ENCODE measurements at regions of chr11 and their contacts with region 1.

Region 1: GRCh38 chr11:47578524-47579460 is at the starts of genes KBTBD4 and NDUFS3:
- DNase-seq: peak; percentile 94
- H3K4me3 ChIP-seq: peak within 1 kb of the TSS; percentile 85
- H3K27ac ChIP-seq: peak within 1 kb of the TSS; percentile 40
- H3K4me1 ChIP-seq: peaks cover 21% of the 10 kb centered on the region
- CTCF ChIP-seq: no peak
- total RNA-seq, gene KBTBD4: 25.2 and 25.8 TPM in 2 replicates
- total RNA-seq, gene NDUFS3: 73.9 and 92.7 TPM in 2 replicates

Region 2: GRCh38 chr11:47552566-47553416 is 26.0 kb before region 1 on chr11 and contains the start of gene CELF1:
- CTCF ChIA-PET with region 1: interaction called, 3 read pairs
- POLR2A ChIA-PET with region 1: interaction called, 13 read pairs
- intact Hi-C with region 1: loop called (anchors 1 kb)
- DNase-seq: peak; percentile 96
- H3K4me3 ChIP-seq: peak within 1 kb of the TSS; percentile 89
- H3K27ac ChIP-seq: peak within 1 kb of the TSS; percentile 65
- H3K4me1 ChIP-seq: peaks cover 29% of the 10 kb centered on the region
- CTCF ChIP-seq: peak; percentile 88
- total RNA-seq, gene CELF1: 82.1 and 87.4 TPM in 2 replicates

Region 3: GRCh38 chr11:47565340-47566148 is 13.2 kb before region 1 on chr11 and contains the start of gene PTPMT1:
- CTCF ChIA-PET with region 1: interaction called, 7 read pairs
- POLR2A ChIA-PET with region 1: interaction called, 11 read pairs
- intact Hi-C with region 1: no loop called
- DNase-seq: peak; percentile 69
- H3K4me3 ChIP-seq: peak within 1 kb of the TSS; percentile 75
- H3K27ac ChIP-seq: peak within 1 kb of the TSS; percentile 23
- H3K4me1 ChIP-seq: peaks cover 7% of the 10 kb centered on the region
- CTCF ChIP-seq: no peak
- total RNA-seq, gene PTPMT1: 52.6 and 62.8 TPM in 2 replicates

Region 4: GRCh38 chr11:47715082-47715669 is 136.4 kb after region 1 on chr11 and contains the start of gene AGBL2:
- CTCF ChIA-PET with region 1: no interaction called
- POLR2A ChIA-PET with region 1: interaction called, 3 read pairs
- intact Hi-C with region 1: loop called (anchors 10 kb)
- DNase-seq: peak; percentile 85
- H3K4me3 ChIP-seq: peak within 1 kb of the TSS; percentile 69
- H3K27ac ChIP-seq: peak within 1 kb of the TSS; percentile 43
- H3K4me1 ChIP-seq: peaks cover 16% of the 10 kb centered on the region
- CTCF ChIP-seq: no peak
- total RNA-seq, gene AGBL2: 2.0 and 5.9 TPM in 2 replicates

Measured in OCI-LY7 (cell line).